ENCODE measurements at regions of chr5 and their contacts with region 1.

Region 1: GRCh38 chr5:71522151-71522550 is 65.0 kb upstream of the MCCC2 start:
- DNase-seq: no peak
- ATAC-seq: no peak

Region 2: GRCh38 chr5:71475788-71476384 is 46.3 kb before region 1 on chr5:
- intact Hi-C with region 1: no loop called
- DNase-seq: no peak
- ATAC-seq: no peak

Region 3: GRCh38 chr5:71569748-71570509 is 47.8 kb after region 1 on chr5:
- intact Hi-C with region 1: loop called in 1 of 2 experiments (anchors 10 kb)
- DNase-seq: no peak
- ATAC-seq: no peak

Region 4: DNA sequence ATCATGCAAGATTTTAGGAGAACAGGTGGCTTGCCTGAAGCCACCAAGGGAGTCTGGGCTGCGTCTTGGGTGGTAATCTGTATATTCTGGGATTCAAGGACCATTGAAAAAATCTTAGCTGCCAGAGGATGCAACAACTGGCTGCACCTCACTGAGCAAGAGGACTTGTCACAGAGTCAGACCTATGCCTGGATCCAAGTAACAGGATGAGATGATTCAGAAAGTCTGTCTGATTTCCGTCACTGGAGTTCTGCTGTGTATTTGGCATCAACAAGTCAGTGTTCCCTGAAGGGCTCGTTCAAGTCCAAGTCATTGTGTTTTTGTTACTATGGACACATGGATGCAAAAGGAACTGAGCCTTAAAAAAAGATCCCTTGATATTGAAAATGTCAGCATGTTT is 159.1 kb after region 1 on chr5:
- intact Hi-C with region 1: no loop called
- DNase-seq: no peak
- ATAC-seq: no peak

Measured in left cardiac atrium (tissue), 4 donors.